Activated T-helper 1 cell treated with anti-CD3 and anti-CD28 coated beads, Interleukin-12 subunit alpha, Interleukin-12 subunit beta, Interleukin-2, Interleukin-4 antibody, amounts not matched to agents 30 ng/mL and 10 ng/mL and 1 ng/mL, durations not matched to agents 14 hours and 24 hours and 36 hours (primary cell): ENCODE measurements at regions of chr2 and their contacts with region 1.

Region 1: DNA sequence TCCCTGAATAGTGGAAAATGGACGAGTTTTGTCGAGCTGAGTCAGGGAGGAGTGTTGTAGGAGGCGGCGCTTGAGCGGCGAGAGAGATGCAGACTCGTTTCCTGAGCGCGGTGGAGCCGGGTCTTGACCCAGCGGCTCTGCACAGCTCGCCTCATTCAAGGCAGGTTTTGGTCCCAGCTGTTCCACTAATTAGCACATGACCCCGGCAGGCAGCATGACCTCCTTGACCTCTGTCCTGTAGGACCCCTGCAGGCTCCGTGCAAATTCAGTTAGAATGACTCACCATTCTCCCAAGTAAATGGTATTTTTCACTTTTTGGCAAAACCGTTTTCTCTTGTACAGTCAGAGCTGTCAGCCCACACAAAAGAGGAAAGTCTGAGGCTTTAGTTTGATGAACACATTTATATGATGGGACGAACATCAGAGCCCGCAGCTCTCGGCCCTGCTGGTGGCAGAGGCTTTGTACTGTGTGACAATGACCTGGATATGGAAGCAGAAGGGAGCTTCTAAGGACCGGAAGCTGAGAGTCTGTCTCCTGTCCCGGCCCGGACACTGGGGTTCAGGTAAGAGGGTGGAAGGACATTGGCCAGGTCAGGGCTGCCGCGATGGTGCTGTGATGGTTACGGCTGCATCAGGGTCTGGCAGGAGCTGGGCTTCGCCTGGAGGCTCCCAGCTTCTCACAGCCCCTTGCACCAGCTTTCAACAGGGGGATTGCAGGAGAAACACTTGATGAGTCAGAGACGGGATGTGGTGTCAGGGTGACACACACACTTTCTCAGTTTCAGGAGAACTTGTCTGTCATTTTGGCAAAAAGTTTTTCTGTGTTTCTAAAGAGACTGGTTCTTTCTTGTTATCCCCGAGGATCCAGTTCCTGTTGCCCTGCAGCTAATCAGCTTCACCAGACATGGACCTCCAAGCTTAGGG is 29.9 kb upstream of the ALKAL2 start:
- DNase-seq: peak; percentile 11
- H3K4me3 Mint-ChIP-seq: peak overlapping the region; percentile 45
- H3K27ac Mint-ChIP-seq: peak overlapping the region; percentile 82
- H3K4me1 Mint-ChIP-seq: peaks cover 23% of the 10 kb centered on the region
- H3K27me3 Mint-ChIP-seq: peaks cover 8% of the 10 kb centered on the region

Region 2: DNA sequence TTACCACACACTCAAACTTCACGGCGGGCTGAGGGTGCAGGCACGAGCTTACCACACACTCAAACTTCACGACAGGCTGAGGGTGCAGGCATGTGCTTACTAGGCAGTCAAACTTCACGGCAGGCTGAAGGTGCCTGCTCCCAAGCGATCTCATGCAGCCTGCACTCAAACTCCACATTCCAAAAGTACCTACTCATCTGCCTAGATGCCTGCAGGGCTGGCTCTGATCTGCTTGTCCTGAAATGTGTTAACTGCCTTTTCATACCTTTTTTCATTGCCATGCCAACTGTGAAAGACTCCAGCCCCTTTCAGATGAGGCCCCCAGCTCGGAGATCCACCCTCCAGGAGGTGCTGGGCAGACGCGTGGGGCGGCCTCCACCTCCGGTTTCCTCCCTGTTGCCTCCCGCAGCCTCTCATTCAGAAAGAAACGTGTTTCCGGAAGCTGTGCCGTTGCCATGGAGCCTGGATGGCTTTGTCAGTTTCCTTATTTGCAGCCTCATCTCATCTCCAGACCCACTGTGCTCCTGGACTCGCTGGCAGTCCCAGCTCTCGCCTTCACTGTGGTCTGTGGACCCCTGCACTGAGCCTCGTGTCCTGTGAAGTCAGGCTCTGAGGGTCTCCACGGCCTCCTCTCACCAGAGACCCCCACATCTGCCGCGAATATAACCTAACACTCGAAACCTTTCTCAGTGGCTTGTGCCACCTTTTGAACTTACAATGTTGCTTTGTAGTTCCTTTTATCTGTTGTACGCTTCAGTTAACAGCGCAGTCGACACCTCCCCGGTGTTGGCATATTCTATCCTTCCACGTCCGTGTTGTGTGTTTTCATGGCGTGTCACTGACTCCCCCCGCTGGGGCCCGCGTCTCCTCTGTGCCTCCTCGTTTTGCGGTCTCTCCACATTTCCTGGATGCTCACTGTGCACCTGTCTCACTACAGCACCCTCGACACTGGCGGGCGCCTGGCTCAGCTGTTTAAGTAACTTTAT is 76.2 kb after region 1 on chr2:
- intact Hi-C with region 1: loop called (anchors 2 kb)
- DNase-seq: peak; percentile 68
- H3K4me3 Mint-ChIP-seq: peak overlapping the region; percentile 73
- H3K27ac Mint-ChIP-seq: peak overlapping the region; percentile 76
- H3K4me1 Mint-ChIP-seq: peaks cover 11% of the 10 kb centered on the region
- H3K27me3 Mint-ChIP-seq: peaks cover 3% of the 10 kb centered on the region

Region 3: DNA sequence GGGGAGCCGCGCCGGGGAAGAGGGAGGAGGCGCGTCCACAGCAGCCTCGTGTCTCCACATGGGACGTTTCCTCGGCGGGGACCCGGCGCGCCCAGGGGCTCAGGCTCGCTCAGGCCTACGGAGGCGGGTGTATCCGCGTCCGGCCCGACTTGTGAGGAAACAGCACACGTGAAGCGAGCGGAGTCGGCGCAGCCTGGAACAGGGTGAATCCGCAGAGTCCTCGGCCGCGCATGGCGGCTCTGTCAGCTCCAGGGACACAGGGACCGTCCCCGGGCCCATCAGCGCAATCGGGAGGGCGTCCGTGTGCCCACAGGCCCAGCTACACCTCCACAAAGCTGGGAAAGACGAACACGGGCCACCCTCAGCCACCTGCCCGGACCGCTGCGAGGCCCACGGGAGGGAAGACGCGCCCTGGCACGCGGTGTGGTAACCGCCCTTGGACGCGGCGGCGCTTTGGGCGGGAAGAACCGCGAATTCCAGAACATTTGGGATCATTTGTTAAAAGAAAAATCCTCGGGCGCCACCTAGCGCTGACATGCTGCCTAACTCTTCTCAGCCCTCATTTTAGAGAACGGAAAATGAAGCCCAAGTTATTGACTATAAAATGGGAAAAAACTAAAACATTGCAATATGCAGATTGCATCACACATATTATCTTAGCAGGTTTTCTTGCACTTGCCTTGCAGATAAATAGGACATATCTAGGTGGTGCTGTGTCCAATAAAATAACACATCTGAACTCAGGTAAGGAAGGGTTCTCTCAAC is 319.1 kb after region 1 on chr2:
- intact Hi-C with region 1: loop called (anchors 10 kb)
- DNase-seq: peak; percentile 11
- H3K4me3 Mint-ChIP-seq: peak overlapping the region; percentile 73
- H3K27ac Mint-ChIP-seq: peak overlapping the region; percentile 72
- H3K4me1 Mint-ChIP-seq: no peaks in the 10 kb centered on the region
- H3K27me3 Mint-ChIP-seq: peaks cover 4% of the 10 kb centered on the region